ENCODE measurements at regions of chr19 and their contacts with region 1.

Region 1: DNA sequence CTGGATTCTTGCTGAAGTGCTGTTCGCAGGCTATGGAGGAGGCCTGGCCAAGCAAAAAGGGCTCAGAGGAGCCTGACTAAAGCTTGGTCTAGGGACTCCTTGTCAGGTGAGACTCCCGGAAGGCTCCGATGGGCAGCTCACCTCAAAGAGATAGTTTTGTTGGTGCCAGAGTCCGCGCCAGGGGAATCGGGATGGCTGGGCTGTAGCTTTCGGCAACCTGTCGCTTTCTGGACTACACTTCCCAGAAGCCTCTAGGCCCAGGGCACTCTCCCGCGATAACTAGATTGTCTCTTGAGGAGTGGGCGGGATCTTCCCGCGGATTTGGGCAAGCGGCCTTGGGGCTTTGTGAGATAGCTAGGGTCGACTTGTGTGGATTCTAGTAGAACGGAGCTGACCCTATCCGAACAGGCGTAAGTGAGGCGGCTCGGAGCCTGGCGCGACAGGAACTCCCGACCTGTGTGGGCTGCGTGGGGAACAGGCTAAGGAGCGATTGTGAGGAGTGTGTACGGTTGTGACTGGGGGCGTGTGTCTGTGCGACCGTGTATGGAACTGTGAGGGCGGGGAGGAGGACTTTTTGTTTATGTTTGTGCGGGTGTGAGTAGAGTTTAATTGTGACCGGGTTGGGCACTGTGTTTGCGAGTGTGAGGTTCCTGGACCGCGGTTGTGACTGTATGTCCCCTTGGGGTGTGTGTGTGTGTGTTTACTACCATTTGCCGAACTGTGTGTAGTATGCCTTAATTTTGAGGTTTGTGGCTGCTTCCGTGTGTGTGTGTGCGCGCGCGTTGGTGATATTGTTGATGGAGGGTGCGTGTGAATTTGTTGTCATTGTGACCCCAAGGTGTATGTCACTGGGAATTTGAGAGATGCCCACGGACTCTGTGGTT is at the start of gene ZNF345:
- DNase-seq: peak; percentile 62 to 91 (median 88)
- ATAC-seq: peak; percentile 93
- H3K4me3 ChIP-seq: peak within 1 kb of the TSS; percentile 92
- H3K4me3 Mint-ChIP-seq: no peak within 1 kb of the TSS
- H3K27ac ChIP-seq: peak within 1 kb of the TSS; percentile 86
- H3K27ac Mint-ChIP-seq: no peak within 1 kb of the TSS
- H3K4me1 ChIP-seq: peaks cover 9 to 16% of the 10 kb centered on the region in 2 donors
- H3K4me1 Mint-ChIP-seq: peaks cover 0 to 22% (median 13%) of the 10 kb centered on the region in 7 donors
- H3K27me3 ChIP-seq: no peaks in the 10 kb centered on the region
- H3K27me3 Mint-ChIP-seq: no peaks in the 10 kb centered on the region
- total RNA-seq, gene ZNF345: 6.8 to 18.2 (median 7.8) TPM

Region 2: GRCh38 chr19:36378625-36379509 is 471.9 kb before region 1 on chr19 and contains the start of gene ZFP14:
- CTCF ChIA-PET with region 1: no interaction called
- POLR2A ChIA-PET with region 1: interaction called, 3 read pairs
- intact Hi-C with region 1: loop called (anchors 1 to 5 kb)
- DNase-seq: peak; percentile 86 to 95 (median 93)
- ATAC-seq: peak; percentile 99
- H3K4me3 ChIP-seq: peak within 1 kb of the TSS; percentile 86
- H3K4me3 Mint-ChIP-seq: peak within 1 kb of the TSS; percentile 82 to 98 (median 94)
- H3K27ac ChIP-seq: peak within 1 kb of the TSS; percentile 86
- H3K27ac Mint-ChIP-seq: peak within 1 kb of the TSS; percentile 55 to 98 (median 94)
- H3K4me1 ChIP-seq: peaks cover 0 to 10% of the 10 kb centered on the region in 2 donors
- H3K4me1 Mint-ChIP-seq: peaks cover 9 to 23% (median 21%) of the 10 kb centered on the region in 7 donors
- H3K27me3 ChIP-seq: no peaks in the 10 kb centered on the region
- H3K27me3 Mint-ChIP-seq: no peaks in the 10 kb centered on the region
- total RNA-seq, gene ZFP14: 5.3 to 24.0 (median 9.2) TPM

Region 3: GRCh38 chr19:36605101-36605876 is 245.5 kb before region 1 on chr19 and contains the start of gene ZNF382:
- CTCF ChIA-PET with region 1: no interaction called
- POLR2A ChIA-PET with region 1: interaction called, 4 read pairs
- intact Hi-C with region 1: loop called (anchors 1 to 10 kb)
- DNase-seq: peak; percentile 77 to 92 (median 86)
- ATAC-seq: peak; percentile 80
- H3K4me3 ChIP-seq: peak within 1 kb of the TSS; percentile 95
- H3K4me3 Mint-ChIP-seq: peak within 1 kb of the TSS; percentile 81 to 99 (median 93)
- H3K27ac ChIP-seq: peak within 1 kb of the TSS; percentile 84
- H3K27ac Mint-ChIP-seq: peak within 1 kb of the TSS; percentile 78 to 98 (median 93)
- H3K4me1 ChIP-seq: peaks cover 7 to 15% of the 10 kb centered on the region in 2 donors
- H3K4me1 Mint-ChIP-seq: peaks cover 20 to 32% (median 27%) of the 10 kb centered on the region in 7 donors
- H3K27me3 ChIP-seq: no peaks in the 10 kb centered on the region
- H3K27me3 Mint-ChIP-seq: no peaks in the 10 kb centered on the region
- total RNA-seq, gene ZNF382: 5.4 to 20.2 (median 12.2) TPM

Region 4: DNA sequence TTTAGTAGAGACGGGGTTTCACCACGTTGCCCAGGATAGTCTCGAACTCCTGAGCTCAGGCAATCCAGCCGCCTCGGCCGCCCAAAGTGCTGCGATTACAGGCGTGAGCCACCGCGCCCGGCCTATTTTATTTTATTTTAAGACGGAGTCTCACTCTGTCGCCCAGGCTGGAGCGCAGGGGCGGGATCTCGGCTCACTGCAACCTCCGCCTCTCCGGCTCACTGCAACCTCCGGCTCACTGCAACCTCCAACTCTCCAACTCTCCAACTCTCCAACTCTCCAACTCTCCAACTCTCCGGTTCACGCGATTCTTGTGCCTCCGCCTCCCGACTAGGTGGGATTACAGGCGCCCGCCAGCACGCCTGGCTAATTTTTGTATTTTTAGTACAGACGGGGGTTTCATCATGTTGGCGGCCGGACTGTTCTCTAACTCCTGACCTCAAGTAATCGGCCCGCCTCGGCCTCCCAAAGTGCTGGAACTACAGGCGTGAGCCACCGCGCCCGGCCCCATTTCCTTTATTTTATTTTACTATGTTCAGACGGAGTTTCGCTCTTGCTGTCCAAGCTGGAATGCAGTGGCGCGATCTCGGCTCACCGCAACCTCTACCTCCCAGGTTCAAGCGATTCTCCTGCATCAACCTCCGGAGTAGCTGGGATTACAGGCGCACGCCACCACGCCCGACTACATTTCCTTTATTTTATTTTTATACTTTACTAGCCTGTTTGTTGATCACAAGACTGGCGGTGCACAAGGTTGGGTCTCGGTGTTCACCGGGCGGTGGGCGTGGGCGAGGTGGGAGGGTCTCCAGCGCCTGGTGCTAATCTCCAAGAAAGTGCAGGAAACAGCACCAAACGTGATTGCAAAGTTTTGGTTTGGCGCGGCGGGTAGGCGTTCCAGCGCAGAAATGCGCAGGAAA is 54.5 kb before region 1 on chr19:
- CTCF ChIA-PET with region 1: no interaction called
- POLR2A ChIA-PET with region 1: interaction called, 4 read pairs
- intact Hi-C with region 1: loop called (anchors 1 to 2 kb)
- DNase-seq: no peak
- ATAC-seq: no peak
- H3K4me3 ChIP-seq: peak overlapping the region; percentile 100
- H3K4me3 Mint-ChIP-seq: peak overlapping the region; percentile 87 to 99 (median 98)
- H3K27ac ChIP-seq: peak overlapping the region; percentile 79
- H3K27ac Mint-ChIP-seq: peak overlapping the region; percentile 87 to 100 (median 98)
- H3K4me1 ChIP-seq: no peaks in the 10 kb centered on the region
- H3K4me1 Mint-ChIP-seq: peaks cover 0 to 28% (median 16%) of the 10 kb centered on the region in 7 donors
- H3K27me3 ChIP-seq: no peaks in the 10 kb centered on the region
- H3K27me3 Mint-ChIP-seq: peaks cover 0 to 10% (median 9%) of the 10 kb centered on the region in 5 donors

Region 5: DNA sequence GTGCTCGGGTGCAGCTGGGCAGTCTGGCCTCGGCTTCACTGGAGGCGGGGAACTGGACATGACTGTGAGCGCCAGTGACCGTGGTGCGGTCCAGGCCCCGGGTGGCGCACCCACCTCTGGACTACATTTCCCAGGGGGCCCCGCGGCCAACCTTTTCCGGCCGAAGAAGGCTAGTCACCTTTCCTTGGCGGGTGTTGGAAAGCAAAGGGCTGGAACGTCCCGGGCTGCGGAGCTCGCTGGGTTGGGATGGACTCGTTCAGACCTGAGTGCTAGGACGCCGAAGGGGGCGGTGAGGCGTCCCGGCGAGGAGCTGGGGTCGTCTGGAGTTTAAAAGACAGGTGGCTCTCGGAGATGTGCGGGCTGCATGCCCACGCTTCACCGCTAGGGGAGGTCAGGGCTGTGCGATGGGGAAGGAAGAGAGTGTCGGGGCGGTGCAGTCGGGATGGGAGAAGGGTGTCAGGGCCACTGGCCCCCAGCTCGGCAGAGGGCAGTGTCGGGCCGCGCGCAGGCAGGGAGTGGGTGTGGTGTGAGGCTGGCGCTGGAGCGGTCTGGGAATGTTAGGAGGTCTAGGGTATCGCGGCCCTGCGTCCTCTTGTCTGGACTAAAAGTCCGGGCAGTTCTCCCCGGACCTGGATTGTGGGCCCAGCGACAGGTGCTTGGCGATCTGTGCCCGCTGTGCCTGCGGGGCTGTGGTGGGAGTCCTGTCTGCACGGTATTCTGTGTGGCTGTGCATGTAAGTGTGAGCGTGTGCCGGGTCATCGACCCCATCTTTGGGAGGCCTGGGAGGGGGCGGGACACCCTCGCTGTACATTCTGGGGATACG is 122.4 kb after region 1 on chr19:
- CTCF ChIA-PET with region 1: no interaction called
- POLR2A ChIA-PET with region 1: no interaction called
- intact Hi-C with region 1: loop called (anchors 2 to 5 kb)
- DNase-seq: peak; percentile 56 to 84 (median 73)
- ATAC-seq: peak; percentile 96
- H3K4me3 ChIP-seq: peak overlapping the region; percentile 100
- H3K4me3 Mint-ChIP-seq: peak overlapping the region; percentile 92 to 99 (median 97)
- H3K27ac ChIP-seq: peak overlapping the region; percentile 75
- H3K27ac Mint-ChIP-seq: peak overlapping the region; percentile 83 to 97 (median 92)
- H3K4me1 ChIP-seq: peaks cover 5 to 15% of the 10 kb centered on the region in 2 donors
- H3K4me1 Mint-ChIP-seq: peaks cover 9 to 22% (median 13%) of the 10 kb centered on the region in 7 donors
- H3K27me3 ChIP-seq: no peaks in the 10 kb centered on the region
- H3K27me3 Mint-ChIP-seq: no peaks in the 10 kb centered on the region

Region 6: DNA sequence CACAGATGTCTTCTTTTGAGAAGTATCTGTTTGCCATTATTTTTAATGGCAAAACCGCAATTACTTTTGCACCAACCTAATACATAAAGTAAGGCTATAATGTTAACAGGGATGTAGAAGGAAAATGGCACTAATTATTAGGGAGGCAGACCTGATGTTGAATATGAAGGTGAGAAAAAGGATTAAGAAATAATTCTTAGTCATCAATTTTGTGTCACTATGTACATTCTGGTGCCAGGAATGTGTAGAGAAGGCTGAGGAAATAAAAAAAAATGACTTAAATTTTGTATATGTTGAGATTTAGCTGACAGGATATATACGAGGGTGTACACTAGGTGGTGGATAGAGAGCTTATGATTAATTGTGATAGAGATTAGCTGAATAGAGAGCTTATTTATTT is 347.0 kb after region 1 on chr19:
- CTCF ChIA-PET with region 1: no interaction called
- POLR2A ChIA-PET with region 1: no interaction called
- intact Hi-C with region 1: no loop called
- DNase-seq: no peak
- ATAC-seq: no peak
- H3K4me3 ChIP-seq: no peak overlapping the region
- H3K4me3 Mint-ChIP-seq: no peak overlapping the region
- H3K27ac ChIP-seq: no peak overlapping the region
- H3K27ac Mint-ChIP-seq: no peak overlapping the region
- H3K4me1 ChIP-seq: no peaks in the 10 kb centered on the region
- H3K4me1 Mint-ChIP-seq: peaks cover 0 to 2% (median 0%) of the 10 kb centered on the region in 7 donors
- H3K27me3 ChIP-seq: no peaks in the 10 kb centered on the region
- H3K27me3 Mint-ChIP-seq: no peaks in the 10 kb centered on the region